Left colon (tissue), 2 donors: ENCODE measurements at regions of chr10 and their contacts with region 1.

Region 1: GRCh38 chr10:13160934-13161856 is at the start of gene MCM10:
- DNase-seq: peak; percentile 99
- ATAC-seq: peak; percentile 99
- total RNA-seq, gene MCM10: 1.9 to 5.0 TPM

Region 2: GRCh38 chr10:13299437-13300287 is 138.5 kb after region 1 on chr10 and contains the start of gene PHYH:
- intact Hi-C with region 1: loop called in 1 of 2 experiments (anchors 10 kb)
- DNase-seq: peak; percentile 91 to 94
- ATAC-seq: peak; percentile 86
- total RNA-seq, gene PHYH: 50.0 to 91.5 TPM